Left colon (tissue), 2 donors: ENCODE measurements at regions of chr9 and their contacts with region 1.

Region 1: DNA sequence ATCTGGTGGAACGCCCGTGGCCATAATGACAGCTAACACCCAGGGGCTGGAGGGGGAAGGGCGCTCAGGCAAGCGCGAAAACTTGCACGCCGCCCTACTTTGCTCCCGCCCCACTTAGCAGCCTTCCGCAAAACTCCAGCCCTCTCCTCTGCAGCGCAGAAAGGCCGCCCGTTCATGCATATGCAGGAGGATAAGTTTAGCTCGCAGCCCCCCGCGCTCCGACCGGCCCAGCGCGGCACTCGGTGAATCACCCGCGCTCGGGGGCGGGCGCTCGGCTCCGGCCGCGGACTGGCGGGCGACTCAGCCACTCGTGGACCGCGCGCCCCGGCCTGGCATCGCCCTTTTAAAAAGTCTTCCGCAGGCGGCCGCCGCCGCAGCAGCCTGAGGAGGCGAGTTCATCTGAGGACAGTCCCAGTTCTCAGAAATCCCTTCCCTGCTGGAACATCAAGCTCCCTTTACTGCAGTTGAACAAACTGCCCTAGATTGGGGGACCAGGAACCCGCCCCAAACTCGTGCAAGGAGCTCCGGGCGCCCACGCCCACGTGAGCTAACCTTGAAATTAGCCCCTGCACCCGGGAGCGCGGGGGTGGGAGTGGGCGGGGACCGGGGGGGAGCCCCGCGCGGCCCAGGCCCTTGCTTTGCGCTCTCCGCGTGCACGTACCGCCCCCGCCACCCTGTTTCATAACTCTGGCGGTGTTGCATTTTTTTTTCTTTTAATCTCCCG is 4.5 kb upstream of the KLF9 start:
- DNase-seq: peak; percentile 93 to 97
- ATAC-seq: peak; percentile 56

Region 2: DNA sequence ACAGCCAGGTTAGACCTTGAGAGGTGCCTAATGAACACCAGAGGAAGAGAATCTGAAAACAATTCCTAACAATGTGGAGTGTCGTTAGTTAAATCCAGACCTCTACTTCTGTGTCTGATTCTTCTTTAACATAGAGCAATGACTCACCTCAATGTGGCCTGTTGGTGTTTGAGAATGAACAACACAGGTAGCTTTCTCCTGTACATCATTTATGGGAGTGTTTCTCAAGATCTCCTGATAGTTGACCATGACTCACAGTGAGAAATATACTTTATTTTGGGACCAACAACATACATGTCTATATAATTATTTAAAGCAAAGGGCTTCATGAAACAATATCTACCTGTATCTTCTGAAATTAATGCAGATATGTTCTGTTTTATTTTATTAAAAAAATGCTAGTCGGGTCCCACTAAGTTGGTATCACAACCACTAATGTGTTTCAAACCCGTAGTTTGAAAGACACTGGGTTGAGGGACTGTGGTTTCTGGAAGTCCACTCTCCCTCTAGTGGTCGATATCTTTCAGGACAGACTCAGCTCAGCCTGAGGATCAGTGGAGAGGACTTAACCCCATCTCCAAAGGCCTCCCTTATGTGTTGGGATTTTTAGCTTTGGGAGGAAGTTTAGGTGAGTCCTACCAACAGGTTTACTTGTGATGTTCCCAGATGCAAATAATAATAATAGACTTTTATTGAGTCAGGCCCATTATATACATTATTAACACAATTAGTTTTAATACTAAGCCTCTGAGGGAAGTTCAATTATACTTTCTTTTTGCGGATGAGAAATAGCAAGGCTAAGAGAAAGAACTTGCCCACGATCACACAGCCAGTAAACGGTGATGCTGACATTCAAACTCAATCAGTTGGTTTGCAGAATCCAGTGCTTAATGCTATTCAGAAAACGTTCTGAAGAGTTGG is 65.5 kb after region 1 on chr9:
- intact Hi-C with region 1: loop called (anchors 5 to 10 kb)
- DNase-seq: no peak
- ATAC-seq: peak; percentile 74

Region 3: GRCh38 chr9:70504834-70505233 is 85.8 kb after region 1 on chr9:
- intact Hi-C with region 1: no loop called
- DNase-seq: no peak
- ATAC-seq: no peak